ENCODE measurements at regions of chr6 and their contacts with region 1.

Region 1: GRCh38 chr6:38702558-38703397 is at the start of gene GLO1:
- DNase-seq: peak; percentile 96
- ATAC-seq: peak; percentile 100
- H3K4me3 ChIP-seq: peak within 1 kb of the TSS; percentile 52 to 92 (median 88)
- H3K4me3 Mint-ChIP-seq: peak within 1 kb of the TSS; percentile 91
- H3K27ac ChIP-seq: peak within 1 kb of the TSS; percentile 91 to 92
- H3K27ac Mint-ChIP-seq: peak within 1 kb of the TSS; percentile 91
- H3K4me1 ChIP-seq: peaks cover 3 to 5% of the 10 kb centered on the region in 2 donors
- H3K4me1 Mint-ChIP-seq: peaks cover 20% of the 10 kb centered on the region
- H3K27me3 ChIP-seq: peaks cover 0 to 6% (median 4%) of the 10 kb centered on the region in 4 experiments
- H3K27me3 Mint-ChIP-seq: peaks cover 12% of the 10 kb centered on the region
- CTCF ChIP-seq: no peak
- total RNA-seq, gene GLO1: 31.6 and 32.6 TPM in 2 replicates

Region 2: DNA sequence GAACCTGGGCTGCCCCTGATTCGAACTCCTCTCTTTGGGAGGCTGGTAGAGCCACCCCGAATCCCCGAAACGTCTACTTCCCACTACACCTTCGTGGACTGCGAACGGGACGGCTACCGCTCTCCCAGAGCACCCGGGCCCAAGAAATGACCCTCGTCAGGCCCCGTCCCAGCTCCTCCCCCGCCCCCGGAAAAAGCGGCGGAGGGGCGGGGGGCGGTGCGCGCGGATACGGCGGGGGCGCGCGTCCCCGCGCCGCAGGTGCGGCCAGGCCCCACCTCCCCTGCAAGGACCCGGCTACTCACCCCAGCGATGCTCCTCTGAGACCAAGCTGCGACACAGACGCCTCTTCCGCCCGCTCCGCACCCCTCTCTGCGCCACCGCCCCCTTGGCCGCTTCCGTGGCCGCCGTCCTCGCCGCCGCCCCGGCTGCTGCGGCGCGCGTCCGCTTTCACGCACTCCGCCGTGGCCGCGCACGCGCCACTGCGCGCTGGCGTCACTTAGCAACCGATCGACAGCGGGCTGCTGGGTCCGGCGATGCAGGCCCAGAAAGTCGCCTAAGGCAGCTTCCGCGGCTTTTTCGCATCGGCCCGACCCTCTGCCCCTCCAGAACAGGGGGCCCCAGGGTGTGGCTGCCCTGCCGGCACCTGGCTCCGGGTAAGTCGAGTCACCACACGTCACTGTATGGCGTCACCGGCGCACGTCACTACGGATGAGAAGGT is 63.1 kb before region 1 on chr6 and contains the start of gene BTBD9:
- CTCF ChIA-PET with region 1: interaction called, 3 read pairs
- POLR2A ChIA-PET with region 1: no interaction called
- intact Hi-C with region 1: loop called (anchors 1 kb)
- DNase-seq: peak; percentile 95
- ATAC-seq: peak; percentile 88
- H3K4me3 ChIP-seq: peak within 1 kb of the TSS; percentile 83 to 95 (median 88)
- H3K4me3 Mint-ChIP-seq: peak within 1 kb of the TSS; percentile 81
- H3K27ac ChIP-seq: peak within 1 kb of the TSS; percentile 92 to 99
- H3K27ac Mint-ChIP-seq: peak within 1 kb of the TSS; percentile 89
- H3K4me1 ChIP-seq: peaks cover 18% of the 10 kb centered on the region in 2 donors
- H3K4me1 Mint-ChIP-seq: peaks cover 42% of the 10 kb centered on the region
- H3K27me3 ChIP-seq: no peaks in the 10 kb centered on the region
- H3K27me3 Mint-ChIP-seq: no peaks in the 10 kb centered on the region
- CTCF ChIP-seq: no peak
- total RNA-seq, gene BTBD9: 48.9 and 57.8 TPM in 2 replicates

Region 3: GRCh38 chr6:38688579-38689087 is 14.1 kb before region 1 on chr6:
- CTCF ChIA-PET with region 1: interaction called, 4 read pairs
- POLR2A ChIA-PET with region 1: no interaction called
- intact Hi-C with region 1: loop called (anchors 2 kb)
- DNase-seq: peak; percentile 51
- ATAC-seq: peak; percentile 96
- H3K4me3 ChIP-seq: no peak overlapping the region
- H3K4me3 Mint-ChIP-seq: peak overlapping the region; percentile 40
- H3K27ac ChIP-seq: peak overlapping the region; percentile 18 to 50
- H3K27ac Mint-ChIP-seq: peak overlapping the region; percentile 56
- H3K4me1 ChIP-seq: peaks cover 12 to 15% of the 10 kb centered on the region in 2 donors
- H3K4me1 Mint-ChIP-seq: peaks cover 51% of the 10 kb centered on the region
- H3K27me3 ChIP-seq: no peaks in the 10 kb centered on the region
- H3K27me3 Mint-ChIP-seq: no peaks in the 10 kb centered on the region
- CTCF ChIP-seq: no peak

Region 4: GRCh38 chr6:39114704-39115599 is 412.2 kb after region 1 on chr6 and contains the start of gene SAYSD1:
- CTCF ChIA-PET with region 1: no interaction called
- POLR2A ChIA-PET with region 1: no interaction called
- intact Hi-C with region 1: loop called (anchors 5 kb)
- DNase-seq: peak; percentile 98
- ATAC-seq: peak; percentile 87
- H3K4me3 ChIP-seq: peak within 1 kb of the TSS; percentile 36 to 94 (median 80)
- H3K4me3 Mint-ChIP-seq: peak within 1 kb of the TSS; percentile 94
- H3K27ac ChIP-seq: peak within 1 kb of the TSS; percentile 86 to 94
- H3K27ac Mint-ChIP-seq: peak within 1 kb of the TSS; percentile 98
- H3K4me1 ChIP-seq: peaks cover 17 to 18% of the 10 kb centered on the region in 2 donors
- H3K4me1 Mint-ChIP-seq: peaks cover 31% of the 10 kb centered on the region
- H3K27me3 ChIP-seq: no peaks in the 10 kb centered on the region
- H3K27me3 Mint-ChIP-seq: peaks cover 3% of the 10 kb centered on the region
- CTCF ChIP-seq: no peak
- total RNA-seq, gene SAYSD1: 17.8 and 21.9 TPM in 2 replicates

Measured in B cell (primary cell).